PC-9 (cell line): ENCODE measurements at regions of chr1 and their contacts with region 1.

Region 1: DNA sequence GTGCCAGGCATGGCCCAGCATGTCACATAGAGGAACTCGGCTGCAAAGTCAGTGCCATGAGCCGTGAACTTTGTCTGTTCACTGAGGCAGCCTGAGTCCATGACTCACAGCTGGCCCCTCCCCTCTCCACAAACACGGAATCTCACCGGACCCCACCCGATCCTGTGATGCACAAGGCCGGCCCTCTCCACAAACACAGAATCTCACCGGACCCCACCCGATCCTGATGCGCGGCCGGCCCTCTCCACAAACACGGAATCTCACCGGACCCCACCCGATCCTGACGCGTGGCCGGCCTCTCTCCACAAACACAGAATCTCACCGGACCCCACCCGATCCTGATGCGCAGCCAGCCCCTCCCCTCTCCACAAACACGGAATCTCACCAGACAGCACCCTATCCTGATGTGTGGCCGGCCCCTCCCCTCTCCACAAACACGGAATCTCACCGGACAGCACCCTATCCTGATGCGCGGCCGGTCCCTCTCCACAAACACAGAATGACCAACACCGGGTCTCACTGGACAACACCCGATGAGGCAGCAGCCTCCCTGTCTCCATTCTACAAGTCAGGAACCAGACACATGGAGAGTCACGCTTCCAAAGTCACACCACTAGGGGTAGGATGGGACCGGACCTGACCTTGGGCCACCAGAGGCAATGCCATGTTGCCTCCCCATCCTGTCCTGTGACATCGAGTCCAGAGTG is 39.6 kb upstream of the GPR153 start:
- DNase-seq: peak in 1 of 2 experiments; percentile 50
- H3K4me3 ChIP-seq: no peak overlapping the region
- H3K27ac ChIP-seq: peak overlapping the region; percentile 56; the same call in 1 of the 2 replicates
- H3K4me1 ChIP-seq: peaks cover 20% of the 10 kb centered on the region
- H3K27me3 ChIP-seq: no peaks in the 10 kb centered on the region
- CTCF ChIP-seq: no peak

Region 2: GRCh38 chr1:6259491-6260425 is 40.7 kb before region 1 on chr1:
- CTCF ChIA-PET with region 1: no interaction called
- POLR2A ChIA-PET with region 1: no interaction called
- intact Hi-C with region 1: loop called (anchors 5 kb)
- DNase-seq: peak; percentile 55 to 79
- H3K4me3 ChIP-seq: peak overlapping the region; percentile 54; the same call in 1 of the 2 replicates
- H3K27ac ChIP-seq: no peak overlapping the region
- H3K4me1 ChIP-seq: no peaks in the 10 kb centered on the region
- H3K27me3 ChIP-seq: no peaks in the 10 kb centered on the region
- CTCF ChIP-seq: no peak

Region 3: GRCh38 chr1:6317098-6317760 is 16.7 kb after region 1 on chr1:
- CTCF ChIA-PET with region 1: no interaction called
- POLR2A ChIA-PET with region 1: no interaction called
- intact Hi-C with region 1: loop called (anchors 2 kb)
- DNase-seq: peak in 1 of 2 experiments; percentile 26
- H3K4me3 ChIP-seq: no peak overlapping the region
- H3K27ac ChIP-seq: peak overlapping the region; percentile 58
- H3K4me1 ChIP-seq: no peaks in the 10 kb centered on the region
- H3K27me3 ChIP-seq: no peaks in the 10 kb centered on the region
- CTCF ChIP-seq: no peak